ENCODE measurements at regions of chr13 and their contacts with region 1.

Region 1: GRCh38 chr13:20773194-20774080 is at the start of gene EEF1AKMT1:
- DNase-seq: peak; percentile 96
- total RNA-seq, gene EEF1AKMT1: 6.2 TPM

Region 2: GRCh38 chr13:20703780-20704445 is 69.5 kb before region 1 on chr13:
- intact Hi-C with region 1: no loop called
- DNase-seq: no peak

Region 3: GRCh38 chr13:20814224-20814910 is 40.9 kb after region 1 on chr13:
- intact Hi-C with region 1: loop called (anchors 5 kb)
- DNase-seq: peak; percentile 89

Region 4: GRCh38 chr13:20828539-20829364 is 55.3 kb after region 1 on chr13:
- intact Hi-C with region 1: loop called (anchors 5 kb)
- DNase-seq: no peak

Region 5: DNA sequence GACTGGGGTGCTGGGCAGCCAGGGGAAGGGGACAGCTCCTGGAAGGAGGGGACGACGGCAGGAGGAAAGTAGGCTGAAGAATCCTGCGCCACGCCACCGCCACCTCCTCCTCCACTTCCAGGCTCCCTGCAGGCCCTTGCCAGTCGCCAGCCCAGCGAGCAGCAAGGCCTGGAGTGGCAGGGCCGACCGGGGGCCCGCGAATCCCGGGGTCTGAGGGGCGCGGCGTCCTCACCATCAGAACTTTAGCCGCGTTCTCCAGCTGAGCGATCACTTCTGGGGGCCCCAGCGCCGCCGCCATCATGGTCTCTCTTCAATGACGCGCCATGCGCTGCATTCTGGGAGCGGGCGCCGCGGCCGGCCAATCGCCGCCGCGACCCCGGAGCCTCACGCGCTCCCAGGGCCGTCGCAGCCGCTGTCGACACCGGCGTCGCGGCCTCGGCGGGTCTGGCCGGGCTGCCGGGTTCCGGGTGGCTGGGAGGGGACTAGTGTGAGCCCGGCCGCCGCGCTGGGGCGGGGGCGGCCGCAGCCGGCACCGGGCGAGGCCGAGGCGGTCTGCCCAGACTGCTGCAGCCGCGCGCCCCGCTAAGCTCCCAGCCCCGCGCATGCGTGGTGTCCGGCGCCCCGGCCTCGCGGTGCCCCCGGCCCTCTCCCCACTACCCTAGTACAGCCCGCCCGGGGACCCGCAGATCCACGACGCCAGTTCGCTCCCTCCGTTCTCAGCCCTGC is 129.2 kb after region 1 on chr13 and contains the start of gene XPO4:
- intact Hi-C with region 1: loop called (anchors 10 kb)
- DNase-seq: peak; percentile 90
- total RNA-seq, gene XPO4: 49.5 TPM

Measured in cardiac septum (tissue), 1 donor.